Ascending aorta (tissue), 2 donors: ENCODE measurements at regions of chrX and their contacts with region 1.

Region 1: DNA sequence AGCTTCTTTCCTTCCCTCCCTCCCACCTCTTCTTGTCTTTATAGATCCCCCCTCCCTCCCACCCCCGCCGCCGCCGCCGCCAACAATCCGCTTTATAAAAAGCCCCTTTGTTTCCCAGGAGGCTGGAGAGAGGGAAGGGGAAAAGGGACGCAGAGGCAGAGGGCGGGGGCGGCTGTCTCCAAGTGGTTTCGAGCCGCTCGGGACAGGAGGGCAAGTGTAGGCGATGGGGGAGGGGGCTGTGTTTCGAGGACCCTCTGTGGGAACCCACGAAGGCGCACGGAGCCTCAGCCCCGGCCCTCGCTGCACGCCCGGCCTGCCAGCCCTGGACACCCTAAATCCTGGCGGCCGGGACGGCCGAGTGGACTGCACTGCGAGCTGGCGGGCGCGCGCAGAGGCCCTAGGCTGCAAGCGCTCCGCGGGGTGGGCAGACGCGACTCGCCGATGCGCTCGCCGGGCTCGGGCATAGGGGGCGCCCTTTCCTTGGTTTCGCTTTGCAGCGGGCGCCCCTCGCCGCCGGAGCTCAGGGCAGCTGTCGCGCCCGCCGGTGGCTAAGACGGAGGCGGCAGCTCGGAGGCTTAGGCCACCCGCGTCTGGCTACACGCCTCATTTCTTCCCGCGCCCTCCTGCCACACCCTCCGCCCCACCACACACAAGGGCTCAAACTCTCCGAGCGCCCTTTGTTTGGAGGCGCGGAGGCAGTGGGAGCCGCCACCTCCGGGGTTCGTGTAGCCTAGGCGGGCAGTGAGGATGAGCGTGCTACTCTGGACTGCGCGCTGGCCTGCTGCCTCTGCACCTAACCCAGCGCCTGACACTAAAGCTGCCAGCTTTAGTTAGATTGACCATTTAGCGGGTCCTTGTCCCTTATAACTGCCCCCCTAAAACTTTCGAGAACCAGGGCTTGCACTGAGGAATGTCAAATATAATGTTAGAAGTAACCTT is 2.2 kb downstream of the MAMLD1 start:
- DNase-seq: peak in 1 of 2 donors; percentile 80
- H3K4me3 ChIP-seq: peak overlapping the region; percentile 63 to 68
- H3K27ac ChIP-seq: peak overlapping the region; percentile 82 to 89
- H3K4me1 ChIP-seq: no peaks in the 10 kb centered on the region
- H3K27me3 ChIP-seq: no peaks in the 10 kb centered on the region
- CTCF ChIP-seq: peak; percentile 57 to 66 (median 62)

Region 2: GRCh38 chrX:149962859-149963757 is 402.2 kb before region 1 on chrX:
- intact Hi-C with region 1: loop called (anchors 5 kb)
- DNase-seq: no peak
- H3K4me3 ChIP-seq: no peak overlapping the region
- H3K27ac ChIP-seq: no peak overlapping the region
- H3K4me1 ChIP-seq: no peaks in the 10 kb centered on the region
- H3K27me3 ChIP-seq: no peaks in the 10 kb centered on the region
- CTCF ChIP-seq: peak; percentile 43 to 64 (median 56)

Region 3: GRCh38 chrX:150200820-150201287 is 164.5 kb before region 1 on chrX:
- intact Hi-C with region 1: loop called (anchors 5 kb)
- DNase-seq: peak; percentile 60 to 89
- H3K4me3 ChIP-seq: no peak overlapping the region
- H3K27ac ChIP-seq: no peak overlapping the region
- H3K4me1 ChIP-seq: no peaks in the 10 kb centered on the region
- H3K27me3 ChIP-seq: no peaks in the 10 kb centered on the region
- CTCF ChIP-seq: no peak

Region 4: GRCh38 chrX:150547375-150548115 is 182.2 kb after region 1 on chrX:
- intact Hi-C with region 1: loop called (anchors 10 kb)
- DNase-seq: peak in 1 of 2 donors; percentile 79
- H3K4me3 ChIP-seq: peak overlapping the region; percentile 24 to 66
- H3K27ac ChIP-seq: peak overlapping the region; percentile 73 to 92
- H3K4me1 ChIP-seq: peaks cover 3 to 5% of the 10 kb centered on the region in 2 donors
- H3K27me3 ChIP-seq: no peaks in the 10 kb centered on the region
- CTCF ChIP-seq: no peak

Region 5: GRCh38 chrX:150587585-150588503 is 222.5 kb after region 1 on chrX:
- intact Hi-C with region 1: loop called (anchors 5 kb)
- DNase-seq: no peak
- H3K4me3 ChIP-seq: no peak overlapping the region
- H3K27ac ChIP-seq: no peak overlapping the region
- H3K4me1 ChIP-seq: no peaks in the 10 kb centered on the region
- H3K27me3 ChIP-seq: no peaks in the 10 kb centered on the region
- CTCF ChIP-seq: peak; percentile 36 to 60 (median 40)